HepG2 (cell line): ENCODE measurements at regions of chr10 and their contacts with region 1.

Region 1: DNA sequence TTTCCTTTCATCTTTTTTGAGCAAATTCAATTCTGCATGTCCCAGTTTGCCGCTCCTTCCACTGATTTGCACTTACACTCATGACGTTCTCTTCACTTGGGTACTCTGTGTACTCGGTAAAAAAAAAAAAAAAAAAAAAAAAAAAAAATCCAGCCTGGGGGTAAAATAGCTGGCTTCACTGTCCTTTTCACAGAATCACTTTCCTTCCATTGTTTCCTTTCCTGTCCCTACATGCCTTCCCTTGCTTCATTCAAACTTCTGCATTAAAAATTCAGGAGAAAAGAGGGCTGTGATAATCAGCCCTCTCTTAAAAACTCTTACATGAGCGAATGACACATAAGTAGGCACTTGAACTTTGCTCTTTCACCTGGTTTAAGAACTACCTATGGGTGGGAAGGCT is 8.7 kb downstream of the ANKRD1 start:
- DNase-seq: no peak
- ATAC-seq: no peak
- H3K4me3 ChIP-seq: no peak overlapping the region
- H3K27ac ChIP-seq: no peak overlapping the region
- H3K4me1 ChIP-seq: peaks cover 16% of the 10 kb centered on the region
- H3K27me3 ChIP-seq: no peaks in the 10 kb centered on the region
- CTCF ChIP-seq: no peak
- EP300 ChIP-seq: no peak
- POLR2A ChIP-seq: no peak
- RAD21 ChIP-seq: no peak

Region 2: GRCh38 chr10:90930070-90930837 is 18.1 kb after region 1 on chr10:
- CTCF ChIA-PET with region 1: no interaction called
- POLR2A ChIA-PET with region 1: interaction called, 11 read pairs
- in situ Hi-C with region 1: no loop called
- intact Hi-C with region 1: no loop called
- DNase-seq: peak; percentile 86
- ATAC-seq: peak; percentile 91
- H3K4me3 ChIP-seq: peak overlapping the region; percentile 9 to 47 (median 37); a peak in 4 of 6 replicates
- H3K27ac ChIP-seq: peak overlapping the region; percentile 90
- H3K4me1 ChIP-seq: peaks cover 64% of the 10 kb centered on the region
- H3K27me3 ChIP-seq: no peaks in the 10 kb centered on the region
- CTCF ChIP-seq: no peak
- EP300 ChIP-seq: peak in 1 of 2 experiments; percentile 51; a peak in 1 of 4 replicates
- POLR2A ChIP-seq: peak in 1 of 2 experiments; percentile 42; a peak in 2 of 4 replicates
- RAD21 ChIP-seq: no peak

Region 3: GRCh38 chr10:90969947-90970684 is 57.9 kb after region 1 on chr10:
- CTCF ChIA-PET with region 1: no interaction called
- POLR2A ChIA-PET with region 1: interaction called, 3 read pairs
- in situ Hi-C with region 1: no loop called
- intact Hi-C with region 1: loop called (anchors 1 kb)
- DNase-seq: peak; percentile 19
- ATAC-seq: no peak
- H3K4me3 ChIP-seq: no peak overlapping the region
- H3K27ac ChIP-seq: no peak overlapping the region
- H3K4me1 ChIP-seq: peaks cover 40% of the 10 kb centered on the region
- H3K27me3 ChIP-seq: no peaks in the 10 kb centered on the region
- CTCF ChIP-seq: peak; percentile 40
- EP300 ChIP-seq: no peak
- POLR2A ChIP-seq: no peak
- RAD21 ChIP-seq: 0 out of 2 replicates have a peak, but pooled peaks have one; percentile 18

Region 4: GRCh38 chr10:90983914-90984549 is 71.9 kb after region 1 on chr10:
- CTCF ChIA-PET with region 1: no interaction called
- POLR2A ChIA-PET with region 1: no interaction called
- in situ Hi-C with region 1: no loop called
- intact Hi-C with region 1: no loop called
- DNase-seq: no peak
- ATAC-seq: no peak
- H3K4me3 ChIP-seq: no peak overlapping the region
- H3K27ac ChIP-seq: no peak overlapping the region
- H3K4me1 ChIP-seq: peaks cover 11% of the 10 kb centered on the region
- H3K27me3 ChIP-seq: no peaks in the 10 kb centered on the region; a peak in 3 of 5 replicates
- CTCF ChIP-seq: no peak
- EP300 ChIP-seq: no peak
- POLR2A ChIP-seq: no peak
- RAD21 ChIP-seq: no peak

Region 5: DNA sequence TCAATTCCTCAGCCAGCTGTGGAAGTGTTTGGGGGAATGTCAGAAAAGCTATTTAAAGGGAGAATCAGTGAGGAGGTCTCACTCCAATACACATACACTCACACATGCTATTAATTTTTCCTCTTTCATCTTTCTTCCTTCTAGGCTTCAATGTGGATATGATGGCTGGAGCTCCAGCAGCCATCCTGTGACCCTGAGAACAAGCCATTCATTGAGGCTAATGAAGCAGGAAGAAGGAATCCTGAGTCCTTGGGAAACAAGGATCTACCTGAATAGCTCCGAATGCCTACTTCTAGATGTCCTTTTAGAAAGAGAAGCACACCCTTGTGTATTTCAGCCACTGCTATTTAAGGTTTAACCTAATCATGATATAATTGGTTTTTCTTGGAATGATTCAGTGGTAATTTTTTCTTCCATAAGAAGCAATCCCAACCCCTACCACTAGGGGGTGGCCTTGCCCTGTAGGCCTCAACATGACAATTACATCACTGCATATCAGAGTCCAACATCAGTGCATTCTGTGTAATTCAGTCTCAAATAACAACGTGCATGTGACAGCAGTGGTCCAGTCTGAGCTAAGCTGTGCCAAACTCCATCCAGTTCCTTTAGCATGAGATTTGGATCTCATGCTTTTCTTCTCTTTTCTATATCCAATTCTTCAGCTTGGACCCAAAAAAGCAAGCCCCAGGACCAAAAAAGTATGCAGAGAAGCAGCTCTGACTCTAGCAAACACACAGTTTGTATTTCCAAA is 94.0 kb after region 1 on chr10:
- CTCF ChIA-PET with region 1: interaction called, 13 read pairs
- POLR2A ChIA-PET with region 1: no interaction called
- in situ Hi-C with region 1: no loop called
- intact Hi-C with region 1: loop called (anchors 1 kb)
- DNase-seq: peak; percentile 71
- ATAC-seq: peak; percentile 89
- H3K4me3 ChIP-seq: no peak overlapping the region
- H3K27ac ChIP-seq: no peak overlapping the region
- H3K4me1 ChIP-seq: peaks cover 14% of the 10 kb centered on the region
- H3K27me3 ChIP-seq: no peaks in the 10 kb centered on the region
- CTCF ChIP-seq: peak; percentile 88
- EP300 ChIP-seq: no peak
- POLR2A ChIP-seq: no peak
- RAD21 ChIP-seq: peak; percentile 73; the same call in 1 of the 2 replicates

Region 6: DNA sequence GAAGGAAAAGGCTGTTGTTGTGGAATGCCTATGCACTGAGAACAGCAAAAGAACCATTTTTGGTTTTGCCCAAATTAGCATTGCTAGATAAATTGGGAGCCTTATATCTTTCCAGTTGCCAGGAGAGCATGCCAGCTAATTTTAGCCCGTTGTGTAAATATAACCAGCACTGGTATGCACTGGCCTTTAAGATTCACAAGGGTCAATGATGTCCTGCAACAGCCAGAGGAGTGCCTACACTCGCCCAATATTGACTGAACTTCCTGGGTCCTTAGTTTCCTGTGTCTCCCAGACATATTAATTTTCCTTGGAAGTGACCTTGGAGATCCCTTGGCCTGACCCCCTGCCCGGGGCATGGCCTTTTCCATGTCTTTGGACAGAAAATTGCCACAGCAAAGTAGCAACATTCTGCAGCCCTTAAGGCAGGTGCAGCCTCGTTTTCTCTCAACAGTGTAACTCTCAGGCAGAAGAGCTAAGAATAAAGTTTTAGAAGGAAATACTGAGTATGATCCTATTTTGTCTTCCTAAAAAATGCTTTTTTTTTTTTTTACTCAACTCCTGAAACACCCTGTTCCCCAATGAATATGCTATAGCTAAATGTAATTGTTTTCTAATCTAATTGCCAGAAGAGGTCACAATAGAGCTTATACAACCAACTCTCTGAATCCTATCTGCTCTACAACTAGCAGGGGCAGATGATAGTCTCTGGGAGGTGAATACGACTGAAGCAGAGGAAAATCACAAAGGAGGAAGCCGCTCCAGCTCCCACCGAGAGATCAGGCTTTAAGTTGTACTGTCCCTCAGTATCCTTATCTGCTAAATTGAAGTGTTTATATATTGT is 176.3 kb after region 1 on chr10:
- CTCF ChIA-PET with region 1: no interaction called
- POLR2A ChIA-PET with region 1: no interaction called
- in situ Hi-C with region 1: no loop called
- intact Hi-C with region 1: loop called (anchors 1 kb)
- DNase-seq: peak; percentile 30
- ATAC-seq: peak; percentile 86
- H3K4me3 ChIP-seq: no peak overlapping the region
- H3K27ac ChIP-seq: no peak overlapping the region
- H3K4me1 ChIP-seq: no peaks in the 10 kb centered on the region
- H3K27me3 ChIP-seq: no peaks in the 10 kb centered on the region
- CTCF ChIP-seq: peak; percentile 61
- EP300 ChIP-seq: no peak
- POLR2A ChIP-seq: no peak
- RAD21 ChIP-seq: no peak

Region 7: DNA sequence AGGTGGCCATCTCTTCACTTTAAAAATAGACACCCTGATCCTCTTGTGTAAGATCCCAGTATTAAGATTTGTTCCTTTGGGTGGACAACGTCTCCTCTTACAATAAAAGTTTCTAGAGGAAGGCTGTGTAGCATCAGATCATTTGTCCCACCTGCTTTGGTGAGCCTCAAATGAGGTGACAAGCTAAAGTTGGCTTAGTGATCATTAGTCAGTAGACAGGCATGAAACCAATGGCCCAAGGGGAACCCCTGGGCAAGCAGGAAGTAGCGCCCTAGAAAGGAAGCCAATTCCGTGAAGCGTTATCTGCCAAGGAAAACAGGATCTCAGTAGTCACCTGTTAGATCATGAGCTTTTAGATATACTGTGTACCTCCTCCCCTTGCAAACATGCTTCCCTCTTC is 375.1 kb after region 1 on chr10:
- CTCF ChIA-PET with region 1: no interaction called
- POLR2A ChIA-PET with region 1: no interaction called
- in situ Hi-C with region 1: no loop called
- intact Hi-C with region 1: no loop called
- DNase-seq: no peak
- ATAC-seq: no peak; the same call in 2 of the 3 replicates
- H3K4me3 ChIP-seq: no peak overlapping the region
- H3K27ac ChIP-seq: no peak overlapping the region
- H3K4me1 ChIP-seq: no peaks in the 10 kb centered on the region
- H3K27me3 ChIP-seq: 0 out of 5 replicates have a peak, but pooled peaks cover 1 to 10% of the 10 kb centered on the region in 2 experiments
- CTCF ChIP-seq: no peak
- EP300 ChIP-seq: no peak
- POLR2A ChIP-seq: no peak
- RAD21 ChIP-seq: no peak